ENCODE measurements at regions of chr2 and their contacts with region 1.

Region 1: GRCh38 chr2:191245046-191245868 is at the start of gene MYO1B:
- DNase-seq: peak; percentile 78
- ATAC-seq: peak; percentile 83
- H3K4me3 Mint-ChIP-seq: peak within 1 kb of the TSS; percentile 83
- H3K27ac Mint-ChIP-seq: peak within 1 kb of the TSS; percentile 67
- H3K4me1 Mint-ChIP-seq: peaks cover 18% of the 10 kb centered on the region
- H3K27me3 Mint-ChIP-seq: peaks cover 6% of the 10 kb centered on the region
- CTCF ChIP-seq: peak; percentile 52
- total RNA-seq, gene MYO1B: 43.2 to 44.8 TPM

Region 2: GRCh38 chr2:191255756-191256312 is 10.6 kb after region 1 on chr2:
- CTCF ChIA-PET with region 1: no interaction called
- POLR2A ChIA-PET with region 1: no interaction called
- intact Hi-C with region 1: no loop called
- DNase-seq: no peak
- ATAC-seq: no peak
- H3K4me3 Mint-ChIP-seq: no peak overlapping the region
- H3K27ac Mint-ChIP-seq: no peak overlapping the region
- H3K4me1 Mint-ChIP-seq: no peaks in the 10 kb centered on the region
- H3K27me3 Mint-ChIP-seq: no peaks in the 10 kb centered on the region
- CTCF ChIP-seq: no peak

Region 3: GRCh38 chr2:191401287-191401686 is 156.0 kb after region 1 on chr2:
- CTCF ChIA-PET with region 1: no interaction called
- POLR2A ChIA-PET with region 1: no interaction called
- intact Hi-C with region 1: no loop called
- DNase-seq: no peak
- ATAC-seq: no peak
- H3K4me3 Mint-ChIP-seq: no peak overlapping the region
- H3K27ac Mint-ChIP-seq: no peak overlapping the region
- H3K4me1 Mint-ChIP-seq: no peaks in the 10 kb centered on the region
- H3K27me3 Mint-ChIP-seq: no peaks in the 10 kb centered on the region
- CTCF ChIP-seq: no peak

Region 4: DNA sequence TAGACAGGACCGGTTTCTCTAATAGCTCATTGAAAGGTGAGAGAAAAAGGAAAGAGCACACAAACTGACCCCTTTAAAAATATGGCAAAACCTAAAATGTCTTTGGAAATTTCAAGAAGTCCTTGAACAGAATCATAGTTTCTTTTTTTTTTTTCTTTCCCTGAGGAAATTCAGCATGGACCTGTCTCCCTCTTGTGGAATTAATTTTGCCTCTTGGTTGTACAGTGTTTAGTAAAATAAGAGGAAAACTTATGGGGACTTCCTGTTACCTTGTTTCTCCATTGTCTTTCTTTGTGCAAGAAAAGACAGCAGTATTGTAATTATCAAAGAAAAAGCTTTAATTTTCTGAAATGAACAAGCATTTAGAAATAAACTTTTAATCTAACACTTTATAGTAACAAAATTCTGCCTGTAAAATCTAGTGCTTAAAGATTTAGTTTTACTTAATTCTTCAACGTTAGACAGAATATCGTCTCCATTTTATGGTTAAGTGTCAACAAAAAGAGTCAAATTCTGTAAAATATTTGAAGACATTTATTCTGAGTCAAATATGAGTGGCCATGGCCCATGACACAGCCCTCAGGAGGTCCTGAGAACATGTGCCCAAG is 256.4 kb after region 1 on chr2:
- CTCF ChIA-PET with region 1: no interaction called
- POLR2A ChIA-PET with region 1: no interaction called
- intact Hi-C with region 1: loop called (anchors 10 kb)
- DNase-seq: no peak
- ATAC-seq: no peak
- H3K4me3 Mint-ChIP-seq: no peak overlapping the region
- H3K27ac Mint-ChIP-seq: no peak overlapping the region
- H3K4me1 Mint-ChIP-seq: no peaks in the 10 kb centered on the region
- H3K27me3 Mint-ChIP-seq: no peaks in the 10 kb centered on the region
- CTCF ChIP-seq: no peak